ENCODE measurements at regions of chr17 and their contacts with region 1.

Region 1: DNA sequence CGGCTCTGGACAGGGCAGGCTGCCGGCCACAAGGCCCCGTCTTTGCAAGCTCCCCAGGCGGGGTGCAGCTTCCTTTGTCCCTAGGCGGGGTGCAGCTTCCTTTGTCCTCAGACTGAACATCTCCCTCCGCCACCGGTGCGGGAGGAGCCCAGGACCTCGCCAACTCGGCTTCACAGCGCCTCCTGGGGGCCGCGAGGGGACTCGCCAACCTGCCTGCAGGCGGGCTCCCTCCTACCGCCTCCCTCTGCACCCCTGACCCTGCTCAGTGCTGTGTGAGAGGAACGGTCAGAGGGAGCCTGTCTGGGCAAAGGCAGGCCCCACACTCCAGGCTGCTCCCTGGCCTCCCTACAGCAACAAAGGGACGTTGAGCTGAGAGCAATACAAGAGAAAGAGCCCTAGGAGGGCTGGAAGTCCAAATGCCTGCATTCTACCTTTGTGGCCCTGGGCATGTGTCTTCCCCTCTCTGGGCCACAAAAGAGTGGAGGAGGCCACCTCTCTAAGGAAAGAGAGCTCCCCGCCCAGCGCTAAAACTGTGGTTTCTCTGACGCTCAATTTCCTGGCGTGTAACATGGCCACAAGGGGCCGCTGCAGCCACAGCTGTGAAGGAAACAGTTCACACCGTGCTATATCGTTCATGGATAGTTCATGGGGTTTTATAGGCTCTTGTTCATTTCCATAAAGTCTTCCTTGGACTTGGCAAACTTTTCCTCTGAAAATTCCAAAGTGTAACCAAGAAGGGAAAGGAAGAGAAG is 20.9 kb upstream of the KRT19 start:
- DNase-seq: peak; percentile 71 to 96
- H3K4me3 ChIP-seq: no peak overlapping the region
- CTCF ChIP-seq: peak in 1 of 3 donors; percentile 67
- POLR2A ChIP-seq: no peak

Region 2: GRCh38 chr17:40803617-40804082 is 745.4 kb before region 1 on chr17:
- intact Hi-C with region 1: loop called (anchors 10 kb)
- DNase-seq: peak; percentile 74 to 95
- H3K4me3 ChIP-seq: no peak overlapping the region
- CTCF ChIP-seq: peak in 1 of 3 donors; percentile 81
- POLR2A ChIP-seq: no peak

Region 3: GRCh38 chr17:41648411-41649195 is 99.6 kb after region 1 on chr17:
- intact Hi-C with region 1: loop called (anchors 10 kb)
- DNase-seq: peak; percentile 82 to 97
- H3K4me3 ChIP-seq: no peak overlapping the region
- CTCF ChIP-seq: peak in 1 of 3 donors; percentile 78
- POLR2A ChIP-seq: no peak

Region 4: GRCh38 chr17:41710468-41711090 is 161.6 kb after region 1 on chr17:
- intact Hi-C with region 1: no loop called
- DNase-seq: no peak
- H3K4me3 ChIP-seq: no peak overlapping the region
- CTCF ChIP-seq: no peak
- POLR2A ChIP-seq: no peak